Gastrocnemius medialis (tissue), 4 donors: ENCODE measurements at regions of chr4 and their contacts with region 1.

Region 1: DNA sequence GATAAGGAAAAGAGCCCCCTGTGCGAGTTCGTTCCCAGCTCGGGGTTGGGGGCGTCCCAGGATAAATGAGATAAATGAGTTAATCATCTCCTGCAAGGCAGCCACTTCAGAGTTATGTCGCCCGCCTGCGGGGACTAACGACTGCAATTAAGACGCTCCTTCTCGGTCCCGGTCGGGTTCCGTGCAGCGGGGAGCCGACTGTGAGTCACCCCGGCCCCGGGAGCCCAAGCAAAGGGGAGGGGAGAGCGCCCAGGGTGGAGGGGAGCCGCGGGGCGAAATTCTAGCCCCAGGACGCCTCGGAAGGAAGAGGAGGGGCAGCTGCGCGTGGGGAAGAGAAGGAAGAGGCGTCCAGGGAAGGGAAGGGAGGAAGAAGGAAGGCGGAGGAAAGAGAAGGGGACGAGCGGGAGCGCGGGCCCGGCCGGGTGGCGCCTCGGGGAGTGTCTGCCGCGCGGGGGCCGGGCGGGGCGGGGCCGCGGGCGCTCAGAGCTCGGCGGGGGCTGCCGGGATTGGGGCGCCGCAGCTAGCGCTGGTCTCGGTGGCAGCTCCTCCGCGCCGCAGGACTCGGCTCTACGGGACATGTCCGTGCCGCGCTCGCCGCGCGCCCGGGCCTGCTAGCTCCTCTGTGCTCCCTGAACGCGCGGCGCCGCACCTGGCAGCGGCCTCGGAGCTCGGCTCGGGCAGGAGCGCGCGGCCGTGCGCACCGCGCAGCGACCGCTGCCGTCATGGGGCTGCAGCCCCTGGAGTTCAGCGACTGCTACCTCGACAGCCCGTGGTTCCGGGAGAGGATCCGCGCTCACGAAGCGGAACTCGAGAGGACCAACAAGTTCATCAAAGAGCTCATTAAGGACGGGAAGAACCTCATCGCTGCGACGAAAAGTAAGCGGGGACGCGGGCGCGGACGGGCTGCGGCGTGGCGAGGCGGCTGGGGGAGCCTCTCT is at the start of gene ARHGAP10:
- DNase-seq: peak; percentile 50 to 69
- ATAC-seq: peak; percentile 61 to 69
- H3K4me3 ChIP-seq: peak within 1 kb of the TSS; percentile 70 to 97 (median 90)
- H3K27ac ChIP-seq: peak within 1 kb of the TSS; percentile 84 to 97 (median 96)
- H3K4me1 ChIP-seq: peaks cover 22 to 40% of the 10 kb centered on the region in 2 donors
- H3K27me3 ChIP-seq: no peaks in the 10 kb centered on the region
- CTCF ChIP-seq: peak in 1 of 5 experiments; percentile 13
- POLR2A ChIP-seq: peak; percentile 74 to 77
- total RNA-seq, gene ARHGAP10: 22.1 to 34.6 (median 28.0) TPM

Region 2: DNA sequence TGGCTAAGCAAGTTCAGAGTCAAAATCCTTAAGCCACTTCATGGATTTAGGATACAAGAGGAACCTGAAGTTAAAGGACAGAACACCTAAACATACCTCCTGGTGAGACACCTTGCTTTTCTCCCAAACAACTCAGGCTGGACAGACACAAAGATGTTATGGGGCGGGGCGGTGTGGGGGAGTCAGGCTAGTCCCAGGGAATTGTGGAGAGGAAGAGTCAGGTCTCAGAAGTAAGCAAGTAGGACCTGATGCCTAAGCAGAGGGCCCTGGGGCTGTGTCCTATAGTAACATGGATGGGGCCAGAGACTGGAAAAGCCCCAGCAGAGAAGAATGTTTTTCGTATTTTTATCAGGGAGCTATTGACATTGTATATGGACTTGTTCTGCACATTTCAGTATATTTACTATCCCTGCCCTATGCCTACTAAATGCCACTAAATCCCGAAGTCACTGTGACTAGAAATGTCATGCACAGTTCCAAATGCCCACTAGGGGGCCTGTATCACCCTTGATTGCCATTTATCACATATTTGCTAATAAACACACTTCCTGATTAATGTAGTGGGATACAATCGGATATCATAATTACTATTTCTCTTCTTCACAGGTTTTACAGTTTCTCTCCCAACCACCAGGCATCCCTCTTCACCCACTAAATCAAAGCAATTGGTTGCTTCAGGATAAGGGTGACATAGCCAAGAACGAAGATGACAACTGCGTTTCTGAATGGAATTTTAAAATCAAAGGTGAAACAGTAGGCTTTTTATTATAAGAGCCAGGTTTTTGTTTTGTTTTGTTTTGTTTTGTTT is 23.8 kb before region 1 on chr4:
- in situ Hi-C with region 1: no loop called
- intact Hi-C with region 1: loop called (anchors 2 kb)
- DNase-seq: peak in 1 of 2 donors; percentile 42
- ATAC-seq: peak; percentile 78 to 88
- H3K4me3 ChIP-seq: peak overlapping the region in 2 of 4 donors; percentile 7 to 45
- H3K27ac ChIP-seq: peak overlapping the region in 1 of 4 donors; percentile 31
- H3K4me1 ChIP-seq: no peaks in the 10 kb centered on the region
- H3K27me3 ChIP-seq: no peaks in the 10 kb centered on the region
- CTCF ChIP-seq: peak; percentile 82 to 94 (median 91)
- POLR2A ChIP-seq: no peak

Region 3: GRCh38 chr4:147772459-147772969 is 40.7 kb after region 1 on chr4:
- in situ Hi-C with region 1: no loop called
- intact Hi-C with region 1: loop called (anchors 2 kb)
- DNase-seq: no peak
- ATAC-seq: peak; percentile 16 to 60
- H3K4me3 ChIP-seq: peak overlapping the region in 3 of 4 donors; percentile 8 to 23 (median 10)
- H3K27ac ChIP-seq: peak overlapping the region; percentile 76 to 83 (median 80)
- H3K4me1 ChIP-seq: peaks cover 70 to 91% of the 10 kb centered on the region in 2 donors
- H3K27me3 ChIP-seq: no peaks in the 10 kb centered on the region
- CTCF ChIP-seq: no peak
- POLR2A ChIP-seq: no peak

Region 4: GRCh38 chr4:147831551-147832177 is 99.8 kb after region 1 on chr4:
- in situ Hi-C with region 1: no loop called
- intact Hi-C with region 1: loop called (anchors 2 kb)
- DNase-seq: peak; percentile 66 to 75
- ATAC-seq: peak; percentile 57 to 61
- H3K4me3 ChIP-seq: no peak overlapping the region
- H3K27ac ChIP-seq: peak overlapping the region; percentile 92 to 95 (median 94)
- H3K4me1 ChIP-seq: peaks cover 72 to 82% of the 10 kb centered on the region in 2 donors
- H3K27me3 ChIP-seq: no peaks in the 10 kb centered on the region
- CTCF ChIP-seq: no peak
- POLR2A ChIP-seq: peak in 1 of 2 donors; percentile 35

Region 5: GRCh38 chr4:148182230-148182911 is 450.5 kb after region 1 on chr4:
- in situ Hi-C with region 1: no loop called
- intact Hi-C with region 1: no loop called
- DNase-seq: no peak
- ATAC-seq: no peak
- H3K4me3 ChIP-seq: no peak overlapping the region
- H3K27ac ChIP-seq: no peak overlapping the region
- H3K4me1 ChIP-seq: no peaks in the 10 kb centered on the region
- H3K27me3 ChIP-seq: no peaks in the 10 kb centered on the region
- CTCF ChIP-seq: no peak
- POLR2A ChIP-seq: no peak